Mammary epithelial cell (primary cell): ENCODE measurements at regions of chr2 and their contacts with region 1.

Region 1: GRCh38 chr2:25951071-25951547 is 31.2 kb downstream of the KIF3C start:
- DNase-seq: peak; percentile 68
- H3K4me3 ChIP-seq: no peak overlapping the region
- H3K27ac ChIP-seq: no peak overlapping the region
- H3K4me1 ChIP-seq: no peaks in the 10 kb centered on the region
- H3K27me3 ChIP-seq: no peaks in the 10 kb centered on the region
- CTCF ChIP-seq: peak; percentile 89 to 95

Region 2: GRCh38 chr2:25606892-25607291 is 344.2 kb before region 1 on chr2:
- CTCF ChIA-PET with region 1: no interaction called
- dilution Hi-C with region 1: no loop called
- in situ Hi-C with region 1: no loop called
- intact Hi-C with region 1: loop called (anchors 10 kb)
- DNase-seq: peak; percentile 28
- H3K4me3 ChIP-seq: no peak overlapping the region
- H3K27ac ChIP-seq: no peak overlapping the region
- H3K4me1 ChIP-seq: no peaks in the 10 kb centered on the region
- H3K27me3 ChIP-seq: no peaks in the 10 kb centered on the region
- CTCF ChIP-seq: peak; percentile 51 to 68

Region 3: DNA sequence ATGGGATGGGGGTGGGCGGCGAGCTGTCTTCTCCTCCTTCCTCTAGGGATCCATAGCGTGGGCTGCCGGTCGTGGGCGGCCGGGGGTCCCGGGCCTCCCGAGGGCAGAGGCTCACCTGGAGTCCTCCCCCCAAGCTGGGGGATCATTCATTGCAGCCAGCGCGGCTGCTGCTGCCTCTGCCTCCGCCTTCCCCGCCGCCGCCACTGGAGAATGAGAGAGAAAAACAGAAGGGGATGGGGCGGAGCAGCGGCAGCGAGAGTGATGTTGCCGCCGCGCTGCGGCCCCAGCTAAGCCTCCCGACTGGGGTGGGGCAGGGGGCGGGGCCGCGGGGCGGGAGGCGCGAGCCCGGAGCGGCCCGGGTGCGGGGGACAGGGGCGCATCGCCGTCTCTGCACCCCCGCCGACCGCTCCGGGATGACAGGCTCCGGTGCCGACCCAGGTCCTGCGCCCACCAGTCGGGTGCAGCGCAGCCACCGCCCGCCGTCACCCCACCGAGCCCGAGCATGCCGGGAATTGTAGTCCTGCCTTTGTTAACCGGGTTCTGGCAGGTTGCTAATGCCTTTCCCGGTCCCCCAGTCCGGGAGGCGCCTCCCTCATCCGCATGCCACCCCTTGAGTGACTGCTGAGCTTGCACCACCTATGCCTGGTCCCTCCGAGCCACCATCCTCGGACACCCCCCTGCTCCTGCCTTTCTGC is 31.3 kb after region 1 on chr2 and contains the start of gene KIF3C:
- CTCF ChIA-PET with region 1: no interaction called
- dilution Hi-C with region 1: no loop called
- in situ Hi-C with region 1: no loop called
- intact Hi-C with region 1: loop called (anchors 2 kb)
- DNase-seq: peak; percentile 70
- H3K4me3 ChIP-seq: peak within 1 kb of the TSS; percentile 74 to 91 (median 78)
- H3K27ac ChIP-seq: peak within 1 kb of the TSS; percentile 68
- H3K4me1 ChIP-seq: peaks cover 30% of the 10 kb centered on the region
- H3K27me3 ChIP-seq: no peaks in the 10 kb centered on the region
- CTCF ChIP-seq: no peak
- total RNA-seq, gene KIF3C: 30.7 to 35.3 TPM

Region 4: DNA sequence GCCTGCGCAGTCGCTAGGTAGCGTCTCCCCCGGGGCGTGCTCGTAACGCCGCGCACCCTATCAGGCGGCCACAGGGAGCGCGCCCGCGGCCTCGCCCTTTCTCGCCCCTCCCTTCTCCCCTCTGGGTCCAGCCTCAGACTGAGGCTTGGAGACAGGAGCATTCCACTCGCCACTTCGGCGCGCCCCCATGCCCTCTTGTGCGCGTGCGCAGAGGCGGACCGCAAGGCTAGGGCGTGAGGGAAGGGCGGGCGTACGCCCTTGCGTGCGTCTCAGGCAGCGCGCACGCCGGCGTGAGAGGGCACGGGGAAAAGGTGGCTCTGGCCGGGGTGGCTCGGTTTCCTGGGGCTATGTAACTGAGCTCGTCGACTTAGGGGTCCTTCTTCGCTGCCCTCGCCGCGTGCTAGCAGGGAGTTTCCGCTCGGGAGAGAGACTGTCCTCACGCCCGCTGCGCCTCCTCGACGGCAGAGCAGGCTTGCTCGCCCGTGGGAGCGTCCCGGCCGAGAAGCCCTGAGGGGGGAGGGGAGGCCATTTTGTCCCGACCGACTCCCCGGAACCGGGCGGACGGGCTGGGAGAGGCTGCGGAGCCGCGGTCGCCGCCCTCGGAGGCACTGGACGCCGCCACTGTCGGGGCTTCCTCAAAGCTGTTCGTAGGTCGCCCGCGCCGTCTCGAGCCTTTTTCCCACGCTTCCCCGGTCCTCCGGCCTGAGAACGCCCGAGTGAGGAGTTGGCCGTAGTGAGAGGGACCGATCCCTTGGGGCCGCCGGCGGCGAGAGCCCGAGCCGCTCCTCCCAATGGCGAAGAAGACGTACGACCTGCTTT is 82.9 kb after region 1 on chr2 and contains the start of gene RAB10:
- CTCF ChIA-PET with region 1: no interaction called
- dilution Hi-C with region 1: no loop called
- in situ Hi-C with region 1: no loop called
- intact Hi-C with region 1: loop called (anchors 1 kb)
- DNase-seq: peak; percentile 100
- H3K4me3 ChIP-seq: peak within 1 kb of the TSS; percentile 80 to 94 (median 92)
- H3K27ac ChIP-seq: peak within 1 kb of the TSS; percentile 96
- H3K4me1 ChIP-seq: peaks cover 10% of the 10 kb centered on the region
- H3K27me3 ChIP-seq: no peaks in the 10 kb centered on the region
- CTCF ChIP-seq: no peak
- total RNA-seq, gene RAB10: 127 to 188 TPM

Region 5: GRCh38 chr2:26144953-26145680 is 194.0 kb after region 1 on chr2:
- CTCF ChIA-PET with region 1: no interaction called
- dilution Hi-C with region 1: no loop called
- in situ Hi-C with region 1: loop called (anchors 5 to 10 kb)
- intact Hi-C with region 1: loop called (anchors 1 kb)
- DNase-seq: peak; percentile 39
- H3K4me3 ChIP-seq: no peak overlapping the region
- H3K27ac ChIP-seq: no peak overlapping the region
- H3K4me1 ChIP-seq: no peaks in the 10 kb centered on the region
- H3K27me3 ChIP-seq: no peaks in the 10 kb centered on the region
- CTCF ChIP-seq: peak; percentile 69 to 77

Region 6: GRCh38 chr2:26577434-26578112 is 626.5 kb after region 1 on chr2:
- CTCF ChIA-PET with region 1: no interaction called
- dilution Hi-C with region 1: no loop called
- in situ Hi-C with region 1: no loop called
- intact Hi-C with region 1: loop called (anchors 5 kb)
- DNase-seq: peak; percentile 46
- H3K4me3 ChIP-seq: no peak overlapping the region
- H3K27ac ChIP-seq: no peak overlapping the region
- H3K4me1 ChIP-seq: peaks cover 13% of the 10 kb centered on the region
- H3K27me3 ChIP-seq: no peaks in the 10 kb centered on the region
- CTCF ChIP-seq: peak; percentile 98